ENCODE measurements at regions of chr1 and their contacts with region 1.

Region 1: GRCh38 chr1:222634180-222635013 is 16.5 kb downstream of the MIA3 start:
- DNase-seq: peak; percentile 45 to 78 (median 66)
- H3K4me3 ChIP-seq: no peak overlapping the region
- H3K4me3 Mint-ChIP-seq: no peak overlapping the region
- H3K27ac ChIP-seq: no peak overlapping the region
- H3K27ac Mint-ChIP-seq: peak overlapping the region in 6 of 8 donors; percentile 6 to 83 (median 52)
- H3K4me1 ChIP-seq: no peaks in the 10 kb centered on the region
- H3K4me1 Mint-ChIP-seq: peaks cover 5 to 11% (median 5%) of the 10 kb centered on the region in 3 donors
- H3K27me3 ChIP-seq: no peaks in the 10 kb centered on the region
- H3K27me3 Mint-ChIP-seq: no peaks in the 10 kb centered on the region

Region 2: GRCh38 chr1:222465211-222466041 is 169.0 kb before region 1 on chr1:
- CTCF ChIA-PET with region 1: interaction called, 28 read pairs
- POLR2A ChIA-PET with region 1: interaction called, 7 read pairs
- DNase-seq: peak; percentile 59 to 81 (median 73)
- H3K4me3 ChIP-seq: peak overlapping the region; percentile 58
- H3K4me3 Mint-ChIP-seq: peak overlapping the region; percentile 81 to 91 (median 83)
- H3K27ac ChIP-seq: peak overlapping the region; percentile 60
- H3K27ac Mint-ChIP-seq: peak overlapping the region; percentile 69 to 94 (median 92)
- H3K4me1 ChIP-seq: peaks cover 8% of the 10 kb centered on the region
- H3K4me1 Mint-ChIP-seq: peaks cover 9 to 22% (median 15%) of the 10 kb centered on the region in 3 donors
- H3K27me3 ChIP-seq: no peaks in the 10 kb centered on the region
- H3K27me3 Mint-ChIP-seq: peaks cover 1 to 5% of the 10 kb centered on the region in 2 donors

Region 3: GRCh38 chr1:222589462-222590302 is 44.7 kb before region 1 on chr1 and contains the start of gene TAF1A:
- CTCF ChIA-PET with region 1: interaction called, 11 read pairs
- POLR2A ChIA-PET with region 1: interaction called, 4 read pairs
- DNase-seq: peak; percentile 82 to 93 (median 84)
- H3K4me3 ChIP-seq: peak within 1 kb of the TSS; percentile 77
- H3K4me3 Mint-ChIP-seq: peak within 1 kb of the TSS; percentile 96 to 100 (median 99)
- H3K27ac ChIP-seq: peak within 1 kb of the TSS; percentile 78
- H3K27ac Mint-ChIP-seq: peak within 1 kb of the TSS; percentile 92 to 100 (median 99)
- H3K4me1 ChIP-seq: peaks cover 21% of the 10 kb centered on the region
- H3K4me1 Mint-ChIP-seq: peaks cover 42 to 57% (median 55%) of the 10 kb centered on the region in 3 donors
- H3K27me3 ChIP-seq: no peaks in the 10 kb centered on the region
- H3K27me3 Mint-ChIP-seq: no peaks in the 10 kb centered on the region
- total RNA-seq, gene TAF1A: 21.3 to 22.9 TPM

Region 4: DNA sequence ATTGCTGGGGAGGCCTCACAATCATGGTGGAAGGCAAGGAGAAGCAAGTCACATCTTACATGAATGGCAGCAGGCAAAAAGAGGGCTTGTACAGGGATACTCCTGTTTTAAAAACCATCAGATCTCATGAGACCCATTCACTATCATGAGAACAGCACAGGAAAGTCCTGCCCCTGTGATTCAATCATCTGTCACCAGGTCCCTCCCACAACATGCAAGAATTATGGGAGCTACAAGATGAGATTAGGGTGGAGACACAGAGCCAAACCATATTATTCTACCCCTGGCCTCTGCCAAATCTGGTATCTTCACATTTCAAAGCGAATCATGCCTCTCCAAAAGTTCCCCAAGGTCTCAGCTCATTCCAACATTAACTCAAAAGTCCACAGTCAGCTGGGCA is 27.6 kb before region 1 on chr1:
- CTCF ChIA-PET with region 1: no interaction called
- POLR2A ChIA-PET with region 1: no interaction called
- DNase-seq: no peak
- H3K4me3 ChIP-seq: no peak overlapping the region
- H3K4me3 Mint-ChIP-seq: no peak overlapping the region
- H3K27ac ChIP-seq: no peak overlapping the region
- H3K27ac Mint-ChIP-seq: no peak overlapping the region
- H3K4me1 ChIP-seq: no peaks in the 10 kb centered on the region
- H3K4me1 Mint-ChIP-seq: no peaks in the 10 kb centered on the region
- H3K27me3 ChIP-seq: no peaks in the 10 kb centered on the region
- H3K27me3 Mint-ChIP-seq: peaks cover 10 to 29% of the 10 kb centered on the region in 2 donors

Region 5: DNA sequence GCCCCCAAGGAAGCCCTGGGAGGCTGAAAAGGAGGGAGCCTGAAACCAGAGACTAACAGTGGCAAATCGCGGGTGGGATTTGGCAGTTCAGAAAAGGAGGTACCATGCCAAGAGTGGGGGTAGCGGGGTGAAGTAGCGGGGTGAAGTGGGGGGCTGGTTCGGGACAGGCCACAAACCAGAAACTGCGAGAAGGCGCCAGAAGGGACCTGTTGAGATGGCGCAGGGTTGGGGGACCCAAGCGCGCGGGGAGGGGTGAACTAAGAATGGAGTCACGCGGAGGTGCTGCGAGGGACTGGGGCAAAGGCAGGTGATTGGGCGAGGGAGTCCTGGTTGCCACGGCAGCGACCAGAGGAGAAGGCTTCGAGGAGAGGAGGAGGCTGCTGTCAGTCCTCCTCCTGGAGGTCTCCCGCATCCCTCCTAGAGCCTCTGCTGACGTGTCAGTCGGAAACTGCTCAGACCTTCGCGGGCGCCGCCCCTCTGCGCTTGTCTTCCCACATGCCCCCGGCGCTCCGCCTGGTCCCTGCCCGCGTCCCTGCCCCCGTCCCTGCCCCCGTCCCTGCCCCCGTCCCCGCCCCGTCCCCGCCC is 16.9 kb before region 1 on chr1:
- CTCF ChIA-PET with region 1: interaction called, 14 read pairs
- POLR2A ChIA-PET with region 1: no interaction called
- DNase-seq: peak; percentile 92 to 98 (median 95)
- H3K4me3 ChIP-seq: peak overlapping the region; percentile 66
- H3K4me3 Mint-ChIP-seq: peak overlapping the region; percentile 92 to 99 (median 96)
- H3K27ac ChIP-seq: peak overlapping the region; percentile 80
- H3K27ac Mint-ChIP-seq: peak overlapping the region; percentile 96 to 100 (median 98)
- H3K4me1 ChIP-seq: peaks cover 20% of the 10 kb centered on the region
- H3K4me1 Mint-ChIP-seq: peaks cover 34 to 38% (median 35%) of the 10 kb centered on the region in 3 donors
- H3K27me3 ChIP-seq: no peaks in the 10 kb centered on the region
- H3K27me3 Mint-ChIP-seq: peaks cover 16 to 27% of the 10 kb centered on the region in 2 donors